CD8-positive, alpha-beta T cell (primary cell): ENCODE measurements at regions of chr11 and their contacts with region 1.

Region 1: DNA sequence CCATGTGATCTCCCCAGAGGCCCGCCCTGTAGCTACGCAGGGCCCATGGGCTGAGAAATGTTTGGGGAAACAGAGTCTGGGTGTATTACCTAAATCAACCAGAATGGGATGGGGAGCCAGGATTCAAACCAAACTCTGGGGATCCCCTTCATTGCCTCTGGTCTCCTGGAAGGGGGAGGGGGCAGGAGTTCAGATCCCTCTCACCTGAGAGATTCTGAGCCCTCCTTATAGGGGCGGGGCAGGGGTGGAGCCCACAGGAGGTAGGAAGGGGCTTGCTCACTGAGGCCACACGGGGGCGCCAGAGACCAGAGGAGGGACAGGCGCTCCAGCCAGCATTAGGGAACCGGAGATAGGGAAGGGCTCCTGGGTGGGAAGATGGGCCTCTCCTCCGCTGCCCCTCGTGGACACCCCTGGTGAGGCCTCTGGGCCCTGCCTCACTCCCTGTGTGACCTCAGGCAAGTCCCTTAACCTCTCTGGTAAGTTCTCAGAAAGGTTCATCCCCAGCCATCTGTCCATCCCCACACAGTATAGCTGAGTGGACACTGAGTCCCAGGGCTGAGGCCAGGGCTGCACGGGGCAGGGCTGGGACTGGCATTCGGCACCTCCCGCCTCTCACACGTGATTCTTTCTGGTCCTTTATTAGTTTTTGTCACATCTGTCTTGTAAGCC is 2.7 kb upstream of the CDC42BPG start:
- DNase-seq: peak; percentile 79 to 97 (median 92)
- ATAC-seq: peak; percentile 60
- H3K4me3 ChIP-seq: no peak overlapping the region
- H3K4me3 Mint-ChIP-seq: no peak overlapping the region
- H3K27ac ChIP-seq: peak overlapping the region in 1 of 2 experiments; percentile 54
- H3K27ac Mint-ChIP-seq: peak overlapping the region; percentile 32
- H3K4me1 ChIP-seq: peaks cover 63% of the 10 kb centered on the region
- H3K4me1 Mint-ChIP-seq: peaks cover 60% of the 10 kb centered on the region
- H3K27me3 ChIP-seq: no peaks in the 10 kb centered on the region
- H3K27me3 Mint-ChIP-seq: no peaks in the 10 kb centered on the region
- CTCF ChIP-seq: peak; percentile 98

Region 2: GRCh38 chr11:64742889-64743590 is 104.1 kb before region 1 on chr11:
- CTCF ChIA-PET with region 1: interaction called, 11 read pairs
- POLR2A ChIA-PET with region 1: interaction called, 6 read pairs
- intact Hi-C with region 1: loop called (anchors 1 kb)
- DNase-seq: peak; percentile 56 to 91 (median 77)
- ATAC-seq: peak; percentile 13
- H3K4me3 ChIP-seq: peak overlapping the region; percentile 78 to 89
- H3K4me3 Mint-ChIP-seq: peak overlapping the region; percentile 99
- H3K27ac ChIP-seq: peak overlapping the region; percentile 78 to 88
- H3K27ac Mint-ChIP-seq: no peak overlapping the region
- H3K4me1 ChIP-seq: peaks cover 31% of the 10 kb centered on the region
- H3K4me1 Mint-ChIP-seq: peaks cover 48% of the 10 kb centered on the region
- H3K27me3 ChIP-seq: no peaks in the 10 kb centered on the region
- H3K27me3 Mint-ChIP-seq: no peaks in the 10 kb centered on the region
- CTCF ChIP-seq: peak; percentile 90

Region 3: DNA sequence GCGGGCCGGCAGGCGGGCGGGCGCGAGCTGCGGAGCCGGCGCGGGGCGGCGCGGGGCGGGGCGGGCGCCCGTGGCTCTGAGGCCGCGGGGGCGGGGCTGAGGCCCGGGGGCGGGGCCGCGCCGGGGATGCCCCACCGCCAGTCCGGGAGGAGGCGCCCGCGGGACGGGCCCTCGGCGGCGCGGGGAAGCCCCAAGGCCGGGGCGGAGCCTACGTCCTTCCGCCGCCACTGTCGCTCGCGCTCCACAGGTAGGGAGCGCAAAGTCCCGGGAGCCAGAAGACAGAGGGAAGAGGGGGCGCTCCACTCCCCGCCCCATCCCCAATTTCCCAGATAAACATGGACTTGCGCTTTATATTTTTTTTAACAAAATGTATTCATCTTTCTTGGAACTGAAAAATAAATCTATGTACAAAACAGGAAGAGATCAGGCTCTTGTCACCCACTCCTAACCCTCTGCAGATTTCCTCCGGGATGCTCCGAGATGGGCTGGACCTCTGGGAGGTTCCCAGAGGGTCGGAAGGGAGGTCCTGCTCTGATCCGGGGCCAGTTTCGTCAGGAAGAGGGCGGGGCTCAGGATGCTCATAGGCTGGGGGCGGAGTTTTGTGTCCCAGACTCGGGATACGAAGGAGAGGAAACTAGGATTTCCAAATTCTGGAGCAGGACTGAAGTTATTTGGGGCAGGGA is 43.8 kb before region 1 on chr11 and contains the start of gene MAP4K2:
- CTCF ChIA-PET with region 1: interaction called, 4 read pairs
- POLR2A ChIA-PET with region 1: no interaction called
- intact Hi-C with region 1: loop called (anchors 2 kb)
- DNase-seq: peak; percentile 62 to 94 (median 83)
- ATAC-seq: peak; percentile 92
- H3K4me3 ChIP-seq: peak within 1 kb of the TSS; percentile 70 to 79
- H3K4me3 Mint-ChIP-seq: peak within 1 kb of the TSS; percentile 83
- H3K27ac ChIP-seq: peak within 1 kb of the TSS; percentile 65 to 93
- H3K27ac Mint-ChIP-seq: peak within 1 kb of the TSS; percentile 90
- H3K4me1 ChIP-seq: peaks cover 30% of the 10 kb centered on the region
- H3K4me1 Mint-ChIP-seq: peaks cover 37% of the 10 kb centered on the region
- H3K27me3 ChIP-seq: no peaks in the 10 kb centered on the region
- H3K27me3 Mint-ChIP-seq: no peaks in the 10 kb centered on the region
- CTCF ChIP-seq: no peak
- total RNA-seq, gene MAP4K2: 56.2 to 60.1 TPM

Region 4: GRCh38 chr11:64878494-64879243 is 31.5 kb after region 1 on chr11 and contains the start of gene EHD1:
- CTCF ChIA-PET with region 1: interaction called, 1,398 read pairs
- POLR2A ChIA-PET with region 1: interaction called, 810 read pairs
- intact Hi-C with region 1: loop called in 1 of 2 experiments (anchors 1 kb)
- DNase-seq: peak; percentile 99 to 100 (median 100)
- ATAC-seq: peak; percentile 82
- H3K4me3 ChIP-seq: peak within 1 kb of the TSS; percentile 87 to 100
- H3K4me3 Mint-ChIP-seq: peak within 1 kb of the TSS; percentile 95
- H3K27ac ChIP-seq: peak within 1 kb of the TSS; percentile 91 to 96
- H3K27ac Mint-ChIP-seq: peak within 1 kb of the TSS; percentile 97
- H3K4me1 ChIP-seq: peaks cover 57% of the 10 kb centered on the region
- H3K4me1 Mint-ChIP-seq: peaks cover 63% of the 10 kb centered on the region
- H3K27me3 ChIP-seq: no peaks in the 10 kb centered on the region
- H3K27me3 Mint-ChIP-seq: no peaks in the 10 kb centered on the region
- CTCF ChIP-seq: peak; percentile 29
- total RNA-seq, gene EHD1: 187 to 212 TPM

Region 5: GRCh38 chr11:64916775-64917662 is 69.9 kb after region 1 on chr11 and contains the start of gene ATG2A:
- CTCF ChIA-PET with region 1: interaction called, 4 read pairs
- POLR2A ChIA-PET with region 1: interaction called, 4 read pairs
- intact Hi-C with region 1: loop called in 1 of 2 experiments (anchors 1 kb)
- DNase-seq: peak; percentile 98 to 100 (median 99)
- ATAC-seq: peak; percentile 96
- H3K4me3 ChIP-seq: peak within 1 kb of the TSS; percentile 76 to 79
- H3K4me3 Mint-ChIP-seq: peak within 1 kb of the TSS; percentile 94
- H3K27ac ChIP-seq: peak within 1 kb of the TSS; percentile 77 to 93
- H3K27ac Mint-ChIP-seq: peak within 1 kb of the TSS; percentile 94
- H3K4me1 ChIP-seq: peaks cover 26% of the 10 kb centered on the region
- H3K4me1 Mint-ChIP-seq: peaks cover 22% of the 10 kb centered on the region
- H3K27me3 ChIP-seq: no peaks in the 10 kb centered on the region
- H3K27me3 Mint-ChIP-seq: no peaks in the 10 kb centered on the region
- CTCF ChIP-seq: no peak
- total RNA-seq, gene ATG2A: 285 to 311 TPM

Region 6: DNA sequence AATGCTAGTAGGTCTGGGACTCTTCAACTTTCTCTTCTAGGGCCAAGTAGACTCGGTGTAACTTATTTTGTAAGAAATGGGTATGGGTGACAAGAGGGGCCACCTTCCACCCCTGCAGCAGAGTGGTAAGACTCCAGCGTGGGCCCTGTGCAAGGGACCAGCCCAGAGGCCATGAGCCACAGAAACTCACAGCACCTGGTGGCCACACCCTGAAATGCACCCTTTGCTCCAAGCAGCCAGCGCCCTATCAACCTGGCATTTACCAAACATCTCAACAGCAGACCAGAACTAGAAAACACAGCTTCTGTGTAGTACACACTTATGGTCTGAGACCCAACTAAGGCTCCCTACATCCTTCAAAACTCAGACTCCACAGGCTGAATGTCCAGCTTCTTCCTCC is 231.0 kb after region 1 on chr11:
- CTCF ChIA-PET with region 1: interaction called, 3 read pairs
- POLR2A ChIA-PET with region 1: no interaction called
- intact Hi-C with region 1: loop called in 1 of 2 experiments (anchors 1 kb)
- DNase-seq: peak; percentile 50 to 80 (median 74)
- ATAC-seq: peak; percentile 100
- H3K4me3 ChIP-seq: no peak overlapping the region
- H3K4me3 Mint-ChIP-seq: no peak overlapping the region
- H3K27ac ChIP-seq: no peak overlapping the region
- H3K27ac Mint-ChIP-seq: no peak overlapping the region
- H3K4me1 ChIP-seq: peaks cover 6% of the 10 kb centered on the region
- H3K4me1 Mint-ChIP-seq: peaks cover 10% of the 10 kb centered on the region
- H3K27me3 ChIP-seq: no peaks in the 10 kb centered on the region
- H3K27me3 Mint-ChIP-seq: no peaks in the 10 kb centered on the region
- CTCF ChIP-seq: peak; percentile 70

Region 7: DNA sequence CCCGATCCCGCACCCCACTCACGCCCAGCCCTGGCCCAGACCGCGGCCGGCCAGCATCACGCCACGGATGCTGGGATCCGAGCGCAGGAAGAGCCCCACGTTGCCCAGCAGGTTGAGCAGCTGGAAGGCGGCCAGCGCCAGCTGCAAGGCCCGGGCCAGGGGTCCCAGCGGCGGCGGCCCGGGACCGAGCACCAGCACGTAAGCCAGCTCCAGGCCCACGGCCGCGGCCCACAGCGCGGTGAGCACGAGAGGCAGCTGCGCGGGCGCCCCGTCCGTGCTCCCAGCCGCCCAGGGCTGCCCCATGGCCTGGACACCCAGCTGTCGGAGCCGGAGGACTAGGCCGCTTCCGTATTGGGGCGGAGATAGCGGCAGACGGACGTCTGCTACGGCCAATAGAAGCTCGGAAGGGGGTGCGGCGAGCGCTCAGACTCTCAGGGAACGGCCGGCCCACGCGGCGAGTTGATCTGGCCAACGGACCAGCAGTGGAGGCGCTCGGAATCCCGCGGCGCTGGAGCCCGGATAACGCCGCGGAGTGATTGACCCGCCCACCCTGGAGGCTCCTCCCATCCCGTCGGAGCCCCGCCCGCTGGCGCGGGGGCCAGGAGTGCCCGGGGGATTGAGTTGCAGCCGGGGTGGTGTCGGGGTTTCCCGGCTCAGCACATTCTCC is 1698.7 kb after region 1 on chr11 and contains the start of gene ZDHHC24:
- CTCF ChIA-PET with region 1: no interaction called
- POLR2A ChIA-PET with region 1: no interaction called
- intact Hi-C with region 1: no loop called
- DNase-seq: peak; percentile 57 to 93 (median 78)
- ATAC-seq: peak; percentile 81
- H3K4me3 ChIP-seq: peak within 1 kb of the TSS; percentile 68 to 97
- H3K4me3 Mint-ChIP-seq: peak within 1 kb of the TSS; percentile 84
- H3K27ac ChIP-seq: peak within 1 kb of the TSS; percentile 79 to 83
- H3K27ac Mint-ChIP-seq: peak within 1 kb of the TSS; percentile 92
- H3K4me1 ChIP-seq: peaks cover 31% of the 10 kb centered on the region
- H3K4me1 Mint-ChIP-seq: peaks cover 40% of the 10 kb centered on the region
- H3K27me3 ChIP-seq: no peaks in the 10 kb centered on the region
- H3K27me3 Mint-ChIP-seq: no peaks in the 10 kb centered on the region
- CTCF ChIP-seq: no peak
- total RNA-seq, gene ZDHHC24: 15.0 to 15.9 TPM